ENCODE measurements at regions of chr15 and their contacts with region 1.

Region 1: DNA sequence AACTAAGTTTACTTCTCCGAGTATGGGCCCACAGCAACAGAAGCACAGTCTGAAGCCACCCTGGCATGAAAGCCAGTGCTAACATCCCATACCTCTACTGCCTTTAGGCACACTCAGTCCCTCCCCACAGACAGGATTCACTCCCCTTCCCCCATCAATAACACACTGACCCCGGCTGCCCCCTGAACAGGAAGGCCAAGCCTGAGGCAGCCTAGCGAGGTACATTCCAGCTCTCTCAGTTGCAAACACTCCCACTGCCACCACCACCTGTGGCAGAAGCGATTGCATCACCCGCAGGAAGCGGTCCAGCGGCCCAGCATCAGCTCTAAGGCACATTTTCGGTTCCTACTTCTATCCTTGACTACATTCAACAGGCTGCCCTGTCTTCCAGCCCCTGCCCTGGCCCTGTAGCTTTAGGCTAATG is 7.0 kb upstream of the BMF start:
- DNase-seq: peak; percentile 77 to 86 (median 82)
- ATAC-seq: peak; percentile 93 to 98 (median 94)
- H3K4me3 ChIP-seq: no peak overlapping the region
- H3K27ac ChIP-seq: peak overlapping the region in 2 of 4 donors; percentile 29 to 47
- H3K4me1 ChIP-seq: peaks cover 0 to 9% (median 0%) of the 10 kb centered on the region in 3 donors
- H3K27me3 ChIP-seq: no peaks in the 10 kb centered on the region
- CTCF ChIP-seq: no peak

Region 2: DNA sequence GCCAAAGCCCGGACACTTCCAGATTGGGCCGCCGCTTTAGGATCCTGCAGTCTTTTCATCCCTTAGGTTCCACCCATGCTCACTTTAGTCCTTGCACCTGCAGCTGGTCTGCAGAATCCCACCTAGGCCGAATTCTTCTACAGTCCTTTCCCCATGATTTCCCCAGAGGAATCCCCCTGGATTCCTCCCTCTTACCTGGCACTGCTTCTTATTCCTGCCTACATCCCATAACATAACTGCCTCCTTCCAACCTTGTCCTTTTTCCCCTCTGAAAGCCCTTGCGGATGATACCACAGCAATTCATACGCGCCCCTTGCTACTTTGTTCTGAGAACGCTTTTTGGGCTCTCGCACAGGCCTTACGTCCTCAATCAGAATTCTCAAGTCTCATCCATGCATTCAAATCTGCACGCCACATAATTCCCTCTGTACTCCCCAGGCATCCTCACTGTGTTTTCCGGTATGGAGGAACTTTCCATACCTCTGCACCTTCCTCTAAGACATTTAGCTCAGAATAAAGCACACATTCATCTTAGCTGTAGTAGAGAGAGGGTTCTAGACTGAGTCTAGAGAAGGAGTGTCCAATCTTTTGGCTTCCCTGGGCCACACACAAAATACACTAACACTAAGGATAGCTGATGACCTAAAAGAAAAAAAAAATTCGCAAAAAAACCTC is 181.1 kb before region 1 on chr15:
- intact Hi-C with region 1: no loop called
- DNase-seq: no peak
- ATAC-seq: peak; percentile 13 to 15 (median 14)
- H3K4me3 ChIP-seq: peak overlapping the region; percentile 58 to 80 (median 68)
- H3K27ac ChIP-seq: peak overlapping the region; percentile 47 to 88 (median 78)
- H3K4me1 ChIP-seq: peaks cover 9 to 17% (median 14%) of the 10 kb centered on the region in 3 donors
- H3K27me3 ChIP-seq: no peaks in the 10 kb centered on the region
- CTCF ChIP-seq: no peak

Region 3: DNA sequence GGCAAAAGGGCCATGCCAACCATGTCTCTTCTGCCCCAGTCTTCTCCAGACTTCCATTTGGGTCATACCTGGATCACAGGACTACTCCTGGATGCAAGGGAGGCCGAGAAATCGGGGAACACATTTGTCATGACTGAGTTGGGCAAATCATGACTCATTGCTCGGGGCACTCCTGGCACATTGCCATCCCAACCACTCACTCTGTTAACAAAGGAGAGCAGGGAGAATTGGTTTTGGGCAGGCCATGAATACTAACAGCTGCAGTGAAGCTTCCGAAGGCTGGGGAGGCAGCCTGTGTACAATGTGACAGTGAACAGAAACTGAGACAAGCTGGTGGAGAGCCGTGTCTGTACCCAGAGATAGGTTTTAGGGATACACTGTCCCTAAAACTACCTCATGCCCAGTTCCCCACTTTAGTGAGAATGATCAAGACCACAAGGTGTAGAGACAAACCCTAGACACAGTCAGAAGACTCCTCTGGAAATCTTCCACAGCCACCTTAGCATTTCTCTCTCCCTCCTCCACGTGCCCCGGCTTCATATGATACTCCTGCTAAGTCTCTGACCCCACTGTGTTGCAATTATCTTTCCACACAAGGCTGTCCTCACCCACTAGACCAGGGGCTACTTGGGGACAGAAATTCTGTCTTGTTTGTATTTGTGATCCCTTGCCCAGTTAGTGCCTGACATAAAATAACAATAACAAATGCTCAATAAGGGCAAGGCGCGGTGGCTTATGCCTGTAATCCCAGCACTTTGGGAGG is 34.7 kb after region 1 on chr15:
- intact Hi-C with region 1: loop called in 1 of 3 experiments (anchors 5 kb)
- DNase-seq: peak in 3 of 6 donors; percentile 47 to 65 (median 50)
- ATAC-seq: peak in 1 of 4 donors; percentile 54
- H3K4me3 ChIP-seq: no peak overlapping the region
- H3K27ac ChIP-seq: no peak overlapping the region
- H3K4me1 ChIP-seq: peaks cover 1 to 2% (median 1%) of the 10 kb centered on the region in 3 donors
- H3K27me3 ChIP-seq: no peaks in the 10 kb centered on the region
- CTCF ChIP-seq: no peak